H1 (cell line): ENCODE measurements at regions of chr10 and their contacts with region 1.

Region 1: DNA sequence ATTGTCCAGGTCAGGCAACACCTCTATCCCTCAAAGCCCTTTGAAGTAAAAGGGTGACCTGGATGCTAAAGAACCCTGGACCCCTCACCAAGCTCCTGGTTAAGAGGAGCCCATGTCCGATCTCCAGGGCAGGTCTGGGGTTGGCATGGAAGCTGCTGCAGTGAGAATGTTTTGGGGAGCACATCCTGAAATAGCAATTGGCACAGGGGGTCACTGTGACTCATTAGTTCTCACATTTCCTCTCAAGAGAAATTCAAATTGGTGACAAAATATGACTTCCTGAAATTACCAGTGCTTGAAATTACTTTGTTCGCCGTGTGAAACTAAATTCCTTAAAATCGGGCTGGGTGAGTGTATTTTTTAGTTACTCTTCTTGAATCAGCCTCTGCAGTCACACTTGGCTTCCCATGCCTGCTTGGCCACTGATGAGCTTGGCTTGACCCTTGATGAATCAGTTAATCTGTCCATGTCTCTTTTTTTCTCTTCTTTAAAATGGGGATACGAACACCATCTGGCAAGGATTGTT is 18.8 kb upstream of the ARHGAP22 start:
- DNase-seq: no peak
- H3K4me3 ChIP-seq: no peak overlapping the region
- H3K27ac ChIP-seq: no peak overlapping the region
- H3K4me1 ChIP-seq: no peaks in the 10 kb centered on the region
- H3K27me3 ChIP-seq: no peaks in the 10 kb centered on the region
- CTCF ChIP-seq: no peak
- EP300 ChIP-seq: no peak
- POLR2A ChIP-seq: no peak
- RAD21 ChIP-seq: no peak

Region 2: GRCh38 chr10:48634198-48634983 is 10.7 kb after region 1 on chr10:
- CTCF ChIA-PET with region 1: interaction called, 10 read pairs
- POLR2A ChIA-PET with region 1: no interaction called
- DNase-seq: no peak
- H3K4me3 ChIP-seq: no peak overlapping the region
- H3K27ac ChIP-seq: no peak overlapping the region
- H3K4me1 ChIP-seq: no peaks in the 10 kb centered on the region
- H3K27me3 ChIP-seq: no peaks in the 10 kb centered on the region
- CTCF ChIP-seq: no peak
- EP300 ChIP-seq: no peak
- POLR2A ChIP-seq: no peak
- RAD21 ChIP-seq: no peak

Region 3: GRCh38 chr10:48736596-48736995 is 112.9 kb after region 1 on chr10:
- CTCF ChIA-PET with region 1: no interaction called
- POLR2A ChIA-PET with region 1: no interaction called
- DNase-seq: no peak
- H3K4me3 ChIP-seq: no peak overlapping the region
- H3K27ac ChIP-seq: no peak overlapping the region
- H3K4me1 ChIP-seq: peaks cover 0 to 7% (median 3%) of the 10 kb centered on the region in 4 experiments; a peak in 4 of 7 replicates
- H3K27me3 ChIP-seq: no peaks in the 10 kb centered on the region
- CTCF ChIP-seq: no peak
- EP300 ChIP-seq: no peak
- POLR2A ChIP-seq: no peak
- RAD21 ChIP-seq: no peak